ENCODE measurements at regions of chr13 and their contacts with region 1.

Region 1: DNA sequence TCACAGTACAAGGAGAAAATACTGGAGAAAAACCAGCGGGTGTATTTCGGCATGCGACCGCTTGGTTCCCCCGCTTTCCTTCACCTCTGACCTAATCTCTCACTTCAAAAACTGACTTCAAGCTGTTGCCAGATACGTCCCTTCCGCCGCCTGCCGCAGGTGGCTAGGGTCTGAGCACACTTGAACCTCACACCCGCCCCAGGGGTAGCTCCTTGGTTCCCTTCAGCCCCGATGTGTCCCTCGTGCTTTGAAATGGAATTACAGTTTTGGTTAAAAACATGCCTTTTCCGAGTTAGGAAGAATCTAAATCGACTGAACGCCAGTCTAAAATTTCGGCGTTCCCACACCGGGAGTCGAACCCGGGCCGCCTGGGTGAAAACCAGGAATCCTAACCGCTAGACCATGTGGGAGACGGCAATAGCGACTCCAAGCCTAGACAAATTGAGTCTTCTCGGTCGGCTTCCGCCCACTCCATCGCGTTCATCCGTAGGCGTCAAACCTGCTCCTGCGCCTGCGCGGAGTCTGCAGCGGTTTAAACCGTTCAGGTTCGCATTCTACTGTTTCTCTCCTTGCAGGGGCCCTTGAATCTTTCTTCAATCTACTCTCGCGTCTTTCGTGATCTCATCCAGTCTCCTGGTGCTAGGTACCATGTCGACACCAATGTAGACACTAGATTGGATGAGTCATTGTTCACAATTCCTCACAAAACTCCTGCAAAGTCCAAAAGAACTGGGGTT is 71.5 kb downstream of the NUFIP1 start:
- DNase-seq: peak; percentile 95
- H3K4me3 ChIP-seq: peak overlapping the region; percentile 21 to 32
- H3K27ac ChIP-seq: peak overlapping the region; percentile 96 to 97
- H3K4me1 ChIP-seq: peaks cover 20% of the 10 kb centered on the region
- H3K27me3 ChIP-seq: no peaks in the 10 kb centered on the region
- CTCF ChIP-seq: peak in 2 of 4 experiments; percentile 46 to 54
- POLR2A ChIP-seq: peak; percentile 61

Region 2: DNA sequence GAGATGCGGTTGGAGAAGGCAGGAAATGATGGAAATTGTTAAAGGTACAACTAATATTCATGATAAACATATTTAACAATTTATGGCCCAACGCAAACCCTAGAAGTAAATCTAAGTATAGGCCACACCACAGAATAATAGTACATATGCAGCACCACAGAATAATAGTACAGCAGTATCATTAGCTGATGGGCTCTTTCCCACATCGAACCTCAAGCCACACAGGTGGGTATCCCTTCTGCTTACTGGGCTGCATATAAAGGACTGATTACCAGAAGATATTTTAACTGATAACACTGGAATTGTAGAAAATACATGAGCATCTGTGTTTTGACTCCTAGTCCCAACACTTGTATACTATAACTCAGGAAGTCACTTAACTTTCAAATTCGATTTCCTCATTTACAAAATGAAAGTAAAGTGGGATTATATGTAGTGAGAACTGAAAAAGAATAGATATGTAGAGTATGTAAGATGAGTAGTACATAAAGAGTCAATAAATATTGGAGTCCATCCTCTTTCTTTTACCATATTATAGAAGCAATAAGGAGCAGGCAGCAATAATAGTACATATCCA is 433.1 kb before region 1 on chr13:
- intact Hi-C with region 1: loop called (anchors 5 kb)
- DNase-seq: no peak
- H3K4me3 ChIP-seq: no peak overlapping the region
- H3K27ac ChIP-seq: no peak overlapping the region
- H3K4me1 ChIP-seq: no peaks in the 10 kb centered on the region
- H3K27me3 ChIP-seq: no peaks in the 10 kb centered on the region
- CTCF ChIP-seq: no peak
- POLR2A ChIP-seq: no peak

Region 3: GRCh38 chr13:44583137-44583536 is 334.6 kb before region 1 on chr13:
- intact Hi-C with region 1: loop called (anchors 2 kb)
- DNase-seq: no peak
- H3K4me3 ChIP-seq: no peak overlapping the region
- H3K27ac ChIP-seq: no peak overlapping the region
- H3K4me1 ChIP-seq: no peaks in the 10 kb centered on the region
- H3K27me3 ChIP-seq: no peaks in the 10 kb centered on the region
- CTCF ChIP-seq: no peak
- POLR2A ChIP-seq: no peak

Region 4: GRCh38 chr13:44854313-44855060 is 63.3 kb before region 1 on chr13:
- intact Hi-C with region 1: loop called (anchors 1 kb)
- DNase-seq: peak; percentile 94
- H3K4me3 ChIP-seq: no peak overlapping the region
- H3K27ac ChIP-seq: peak overlapping the region; percentile 81 to 85
- H3K4me1 ChIP-seq: peaks cover 9% of the 10 kb centered on the region
- H3K27me3 ChIP-seq: no peaks in the 10 kb centered on the region
- CTCF ChIP-seq: peak in 1 of 4 experiments; percentile 10
- POLR2A ChIP-seq: no peak

Region 5: GRCh38 chr13:44870456-44870929 is 47.3 kb before region 1 on chr13:
- intact Hi-C with region 1: loop called (anchors 5 kb)
- DNase-seq: peak; percentile 96
- H3K4me3 ChIP-seq: no peak overlapping the region
- H3K27ac ChIP-seq: peak overlapping the region; percentile 83 to 88
- H3K4me1 ChIP-seq: peaks cover 3% of the 10 kb centered on the region
- H3K27me3 ChIP-seq: no peaks in the 10 kb centered on the region
- CTCF ChIP-seq: peak in 2 of 4 experiments; percentile 14 to 39
- POLR2A ChIP-seq: no peak

Region 6: DNA sequence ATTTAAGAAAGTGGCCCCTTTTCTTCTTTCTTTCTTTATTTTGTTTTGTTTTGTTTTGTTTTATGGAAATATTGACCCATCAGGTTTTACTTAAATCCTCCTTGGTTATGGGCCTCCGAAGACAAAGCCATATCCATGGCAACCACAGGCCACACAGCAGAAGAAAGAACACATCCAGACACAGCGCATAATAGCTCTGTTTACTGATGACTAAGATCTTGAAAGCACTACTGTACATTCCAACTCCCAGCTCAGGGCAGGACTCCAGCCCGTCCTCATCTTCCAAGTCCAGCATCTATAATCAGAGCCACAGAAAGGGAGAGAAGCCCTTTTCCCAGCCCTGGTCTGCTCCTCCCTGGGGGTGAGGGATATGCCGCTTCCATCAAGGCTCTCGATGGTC is 12.8 kb before region 1 on chr13:
- intact Hi-C with region 1: loop called (anchors 2 kb)
- DNase-seq: peak; percentile 50
- H3K4me3 ChIP-seq: no peak overlapping the region
- H3K27ac ChIP-seq: peak overlapping the region; percentile 70 to 72
- H3K4me1 ChIP-seq: peaks cover 20% of the 10 kb centered on the region
- H3K27me3 ChIP-seq: no peaks in the 10 kb centered on the region
- CTCF ChIP-seq: no peak
- POLR2A ChIP-seq: no peak

Region 7: DNA sequence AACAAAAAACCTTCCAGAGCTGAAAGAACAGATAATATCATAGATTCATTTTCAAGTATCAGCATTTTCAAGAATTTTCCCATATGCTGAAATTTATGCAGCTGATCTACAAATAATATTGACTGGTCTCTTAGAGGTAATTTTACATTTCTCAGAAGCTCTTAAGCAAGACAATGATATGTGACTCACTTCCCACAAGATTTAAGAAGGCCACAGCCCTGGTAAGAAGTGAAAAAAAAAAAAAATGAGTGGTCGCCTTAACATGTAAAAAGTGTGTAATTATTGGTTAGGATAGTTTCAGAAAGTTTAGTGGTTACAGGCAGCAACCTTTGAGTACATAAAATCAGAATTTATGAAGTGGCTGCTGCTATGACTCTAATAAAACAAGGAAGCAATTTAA is 17.0 kb after region 1 on chr13:
- intact Hi-C with region 1: no loop called
- DNase-seq: no peak
- H3K4me3 ChIP-seq: no peak overlapping the region
- H3K27ac ChIP-seq: no peak overlapping the region
- H3K4me1 ChIP-seq: no peaks in the 10 kb centered on the region
- H3K27me3 ChIP-seq: no peaks in the 10 kb centered on the region
- CTCF ChIP-seq: no peak
- POLR2A ChIP-seq: no peak

Region 8: GRCh38 chr13:44969551-44970484 is 52.1 kb after region 1 on chr13:
- intact Hi-C with region 1: loop called (anchors 5 kb)
- DNase-seq: peak; percentile 14
- H3K4me3 ChIP-seq: no peak overlapping the region
- H3K27ac ChIP-seq: peak overlapping the region; percentile 59 to 78
- H3K4me1 ChIP-seq: peaks cover 14% of the 10 kb centered on the region
- H3K27me3 ChIP-seq: no peaks in the 10 kb centered on the region
- CTCF ChIP-seq: peak; percentile 71 to 93 (median 89)
- POLR2A ChIP-seq: no peak

Measured in prostate gland (tissue), 2 donors.